Aorta (tissue), 5 donors: ENCODE measurements at regions of chr15 and their contacts with region 1.

Region 1: DNA sequence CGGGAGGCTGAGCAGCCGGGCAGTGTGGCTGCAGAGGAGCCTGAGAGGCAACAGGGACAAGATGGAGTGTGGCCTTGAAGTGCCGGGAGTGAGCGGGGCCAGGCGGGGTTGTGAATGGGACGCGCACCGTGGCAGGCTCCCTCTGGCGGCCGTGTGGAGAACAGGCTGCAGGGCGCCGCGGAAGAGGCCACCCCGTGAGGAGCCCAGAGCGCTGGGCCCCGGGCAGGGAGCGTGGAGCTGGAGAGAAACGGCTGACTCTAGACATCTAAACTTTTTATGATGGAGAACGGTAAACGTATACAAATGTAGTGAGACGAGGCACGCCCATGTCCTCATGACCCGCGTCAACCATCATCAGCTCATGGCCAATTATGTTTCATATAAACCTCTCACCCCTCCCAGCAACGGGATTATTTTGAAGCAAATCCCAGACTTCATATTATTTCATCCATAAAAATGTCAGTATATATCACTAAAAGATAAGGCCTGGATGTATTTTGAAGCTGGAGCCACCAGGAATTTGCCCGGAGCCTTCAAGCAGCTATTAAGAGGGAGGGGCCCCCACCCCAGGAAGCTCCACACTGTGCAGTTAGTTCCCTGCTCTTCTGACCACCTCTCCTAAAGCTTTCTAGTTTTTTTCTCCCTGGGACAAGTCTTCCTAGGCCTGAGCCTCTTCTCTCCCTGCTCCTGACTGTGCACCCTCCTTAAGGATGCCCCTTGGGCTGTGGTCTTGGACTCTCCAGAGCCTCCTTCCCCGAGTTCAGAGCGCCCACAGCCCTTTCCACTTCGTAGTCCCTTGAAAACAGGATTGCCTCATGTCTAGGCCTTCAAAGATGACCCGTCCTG is 149.4 kb downstream of the SMAD6 start:
- DNase-seq: peak; percentile 91 to 96
- ATAC-seq: peak; percentile 94
- H3K4me3 ChIP-seq: no peak overlapping the region
- H3K27ac ChIP-seq: peak overlapping the region; percentile 37 to 71
- H3K4me1 ChIP-seq: no peaks in the 10 kb centered on the region
- H3K27me3 ChIP-seq: no peaks in the 10 kb centered on the region

Region 2: GRCh38 chr15:66326051-66326450 is 525.4 kb before region 1 on chr15:
- intact Hi-C with region 1: no loop called
- DNase-seq: no peak
- ATAC-seq: no peak
- H3K4me3 ChIP-seq: no peak overlapping the region
- H3K27ac ChIP-seq: no peak overlapping the region
- H3K4me1 ChIP-seq: no peaks in the 10 kb centered on the region
- H3K27me3 ChIP-seq: no peaks in the 10 kb centered on the region

Region 3: DNA sequence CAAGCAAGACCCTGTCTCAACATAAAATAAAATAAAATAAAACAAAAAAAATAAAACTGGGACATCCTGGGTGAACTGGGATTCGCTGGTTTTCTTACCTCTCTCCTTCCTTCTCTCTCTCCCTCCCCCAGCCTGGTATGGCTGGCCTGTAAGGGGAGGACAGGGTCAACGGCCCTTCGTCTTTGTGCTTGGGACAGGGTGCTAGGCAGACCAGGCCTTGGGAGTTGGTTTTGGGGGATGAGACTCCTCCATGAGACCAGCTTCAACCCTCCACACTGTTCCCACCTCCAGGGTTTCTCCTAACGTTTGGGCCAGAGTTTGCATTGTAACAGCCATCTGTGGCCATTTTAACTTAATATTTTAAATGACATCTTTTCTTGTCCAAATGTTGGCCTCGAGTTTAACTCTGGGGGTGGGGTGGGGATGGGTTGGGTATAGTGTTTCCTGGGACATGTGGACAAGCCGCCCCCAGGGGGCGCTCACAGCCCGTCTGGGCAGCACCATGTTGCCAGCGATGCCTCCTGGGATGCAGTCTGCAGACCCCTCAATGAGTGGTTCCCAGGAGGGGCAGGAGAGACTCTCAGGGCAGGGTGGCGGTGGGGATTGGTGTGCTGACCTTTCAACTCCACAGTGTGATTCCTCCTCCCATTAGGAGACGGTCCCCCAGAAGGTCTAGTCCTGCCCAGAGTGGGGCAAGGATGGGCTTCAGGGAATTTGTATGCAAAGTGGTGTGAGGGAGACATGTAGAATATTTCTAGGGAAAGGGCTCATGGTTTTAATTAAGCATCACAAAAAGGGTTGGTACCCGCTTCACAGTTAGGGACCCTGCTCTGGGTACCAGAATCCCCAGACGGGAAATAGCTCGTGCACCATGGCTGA is 247.9 kb before region 1 on chr15:
- intact Hi-C with region 1: loop called (anchors 2 to 5 kb)
- DNase-seq: peak; percentile 78 to 90
- ATAC-seq: peak; percentile 83
- H3K4me3 ChIP-seq: no peak overlapping the region
- H3K27ac ChIP-seq: no peak overlapping the region
- H3K4me1 ChIP-seq: no peaks in the 10 kb centered on the region
- H3K27me3 ChIP-seq: no peaks in the 10 kb centered on the region

Region 4: DNA sequence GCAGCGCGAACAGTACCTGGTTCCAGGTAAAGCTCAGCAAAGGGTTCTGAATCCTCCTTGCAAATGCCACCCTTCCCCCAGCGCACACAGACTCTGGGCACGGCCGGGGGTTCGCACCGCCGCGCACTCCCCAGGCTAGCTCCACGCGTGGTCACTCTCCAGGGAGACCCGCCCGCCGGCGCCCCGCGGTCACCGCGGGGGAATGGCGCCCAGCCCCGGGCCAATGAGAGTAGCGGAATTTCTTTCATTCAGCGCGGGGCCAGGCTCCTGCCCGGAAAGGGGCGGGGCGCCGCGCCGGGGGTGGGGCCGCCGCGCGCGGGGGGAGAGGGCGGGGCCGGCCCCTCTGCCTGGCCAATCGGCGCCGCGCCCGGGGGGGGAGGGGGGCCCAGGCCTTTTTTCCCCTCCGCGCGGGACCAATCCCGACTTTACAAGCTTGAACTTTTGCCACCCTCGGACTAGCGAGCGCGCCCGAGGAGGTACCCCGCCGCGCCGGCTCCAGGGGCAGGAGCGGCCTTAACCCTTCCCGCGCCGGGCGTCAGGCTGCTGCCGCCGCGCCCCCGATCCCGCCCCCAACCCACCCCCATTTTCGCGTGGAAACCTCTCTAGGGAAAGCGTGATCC is 150.5 kb before region 1 on chr15:
- intact Hi-C with region 1: loop called (anchors 1 to 5 kb)
- DNase-seq: peak; percentile 97 to 98
- ATAC-seq: peak; percentile 85
- H3K4me3 ChIP-seq: peak overlapping the region; percentile 29 to 88
- H3K27ac ChIP-seq: peak overlapping the region; percentile 59 to 75
- H3K4me1 ChIP-seq: no peaks in the 10 kb centered on the region
- H3K27me3 ChIP-seq: no peaks in the 10 kb centered on the region

Region 5: DNA sequence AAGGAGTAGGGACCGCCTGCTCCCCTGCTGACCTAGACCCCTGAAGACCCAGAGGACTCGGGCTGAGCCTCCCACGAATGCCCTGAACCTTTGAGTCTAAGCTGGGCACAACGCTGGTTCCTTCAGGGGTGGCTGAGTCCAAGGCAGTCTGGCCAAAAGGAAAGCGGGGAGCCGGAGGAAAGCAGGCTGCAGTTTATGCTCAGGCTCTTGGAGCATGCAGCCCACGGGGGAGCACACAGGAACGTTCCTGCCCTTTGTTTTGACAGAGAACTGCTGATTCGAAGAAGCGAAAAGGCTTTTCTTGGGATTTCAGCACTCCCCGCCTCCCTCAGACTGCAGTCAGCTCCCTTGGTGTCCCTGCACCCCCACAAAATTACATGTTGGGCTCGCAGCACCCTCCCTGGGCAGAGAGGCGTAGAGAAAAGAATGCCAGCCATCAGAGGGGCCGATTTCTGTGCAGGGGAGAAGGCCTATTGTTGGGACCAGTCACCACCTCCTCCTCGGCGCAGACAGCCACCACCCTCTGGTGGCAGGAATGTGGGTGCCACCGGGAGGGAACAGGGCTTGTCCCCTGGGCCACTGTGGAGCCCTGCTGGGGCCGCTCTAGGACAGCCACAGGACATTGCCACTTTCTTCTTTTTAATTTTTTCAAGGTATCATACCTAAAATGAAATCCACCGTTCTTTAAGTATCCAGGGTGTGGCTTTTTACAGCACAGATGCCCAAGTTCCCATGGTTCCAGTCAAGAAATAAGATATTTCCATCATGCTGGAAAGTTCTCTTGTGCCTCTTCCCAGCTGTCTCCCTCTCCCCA is 77.2 kb before region 1 on chr15:
- intact Hi-C with region 1: loop called (anchors 2 kb)
- DNase-seq: peak; percentile 89 to 97
- ATAC-seq: peak; percentile 92
- H3K4me3 ChIP-seq: no peak overlapping the region
- H3K27ac ChIP-seq: peak overlapping the region; percentile 52 to 58
- H3K4me1 ChIP-seq: no peaks in the 10 kb centered on the region
- H3K27me3 ChIP-seq: no peaks in the 10 kb centered on the region

Region 6: DNA sequence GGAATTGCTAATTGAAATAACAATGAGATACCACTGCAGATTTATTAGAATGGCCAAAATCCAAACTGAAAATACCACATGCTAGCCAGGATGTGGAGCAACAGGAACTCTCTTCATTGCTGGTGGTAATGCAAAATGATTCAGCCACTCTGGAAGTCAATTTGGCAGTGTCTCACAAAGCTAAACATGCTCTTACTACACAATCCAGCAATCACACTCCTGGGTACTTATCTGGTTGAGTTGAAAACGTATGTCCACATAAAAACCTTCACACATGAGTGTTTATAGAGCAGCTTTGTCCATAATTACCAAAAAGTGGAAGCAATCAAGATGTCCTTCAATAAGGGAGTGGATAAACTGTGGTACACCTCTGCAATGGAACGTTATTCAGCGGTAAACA is 36.1 kb before region 1 on chr15:
- intact Hi-C with region 1: no loop called
- DNase-seq: no peak
- ATAC-seq: no peak
- H3K4me3 ChIP-seq: no peak overlapping the region
- H3K27ac ChIP-seq: no peak overlapping the region
- H3K4me1 ChIP-seq: no peaks in the 10 kb centered on the region
- H3K27me3 ChIP-seq: no peaks in the 10 kb centered on the region

Region 7: DNA sequence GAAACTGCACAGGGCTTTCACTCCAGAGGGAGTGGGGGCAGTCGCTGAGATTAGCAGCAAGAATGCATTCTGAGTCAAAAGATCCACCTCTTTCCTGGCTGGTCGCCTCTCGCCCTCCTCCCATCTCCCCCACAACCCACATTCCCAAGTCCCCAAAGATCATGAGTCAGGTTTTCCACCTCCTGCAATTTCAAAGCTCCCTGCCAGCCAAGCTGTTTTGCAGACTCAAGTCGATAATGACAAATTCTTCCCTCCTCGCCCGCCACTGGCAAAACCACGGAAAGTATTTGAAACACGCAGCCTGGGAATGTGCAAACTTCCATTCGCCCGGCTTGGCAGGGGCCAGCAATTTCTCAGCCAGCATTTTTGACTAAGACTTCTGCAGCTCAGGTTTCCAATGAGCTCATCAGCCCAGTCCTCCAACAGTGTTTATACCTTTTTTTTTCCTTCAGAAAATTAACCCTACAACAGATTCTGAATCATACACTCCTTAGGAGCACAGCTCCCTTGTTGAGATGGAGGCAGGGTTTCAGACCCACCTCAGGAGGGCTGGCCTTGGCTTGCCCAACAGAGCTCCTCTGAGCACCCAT is 32.0 kb after region 1 on chr15:
- intact Hi-C with region 1: loop called in 1 of 2 experiments (anchors 5 kb)
- DNase-seq: peak; percentile 95 to 96
- ATAC-seq: peak; percentile 90
- H3K4me3 ChIP-seq: no peak overlapping the region
- H3K27ac ChIP-seq: peak overlapping the region in 1 of 2 donors; percentile 75
- H3K4me1 ChIP-seq: no peaks in the 10 kb centered on the region
- H3K27me3 ChIP-seq: no peaks in the 10 kb centered on the region

Region 8: GRCh38 chr15:66966257-66966656 is 114.8 kb after region 1 on chr15:
- intact Hi-C with region 1: no loop called
- DNase-seq: no peak
- ATAC-seq: no peak
- H3K4me3 ChIP-seq: no peak overlapping the region
- H3K27ac ChIP-seq: no peak overlapping the region
- H3K4me1 ChIP-seq: no peaks in the 10 kb centered on the region
- H3K27me3 ChIP-seq: no peaks in the 10 kb centered on the region